ENCODE measurements at regions of chr14 and their contacts with region 1.

Region 1: GRCh38 chr14:74249433-74250375 is 10.5 kb downstream of the VSX2 start:
- DNase-seq: no peak
- ATAC-seq: no peak
- H3K4me3 Mint-ChIP-seq: no peak overlapping the region
- H3K27ac Mint-ChIP-seq: no peak overlapping the region
- H3K4me1 Mint-ChIP-seq: peaks cover 5% of the 10 kb centered on the region
- H3K27me3 Mint-ChIP-seq: peaks cover 45% of the 10 kb centered on the region
- CTCF ChIP-seq: no peak

Region 2: GRCh38 chr14:73943083-73943482 is 306.6 kb before region 1 on chr14:
- CTCF ChIA-PET with region 1: no interaction called
- POLR2A ChIA-PET with region 1: no interaction called
- intact Hi-C with region 1: no loop called
- DNase-seq: no peak
- ATAC-seq: no peak
- H3K4me3 Mint-ChIP-seq: no peak overlapping the region
- H3K27ac Mint-ChIP-seq: no peak overlapping the region
- H3K4me1 Mint-ChIP-seq: no peaks in the 10 kb centered on the region
- H3K27me3 Mint-ChIP-seq: no peaks in the 10 kb centered on the region
- CTCF ChIP-seq: no peak

Region 3: GRCh38 chr14:74109369-74109768 is 140.3 kb before region 1 on chr14:
- CTCF ChIA-PET with region 1: interaction called, 10 read pairs
- POLR2A ChIA-PET with region 1: interaction called, 3 read pairs
- intact Hi-C with region 1: loop called (anchors 1 kb)
- DNase-seq: no peak
- ATAC-seq: no peak
- H3K4me3 Mint-ChIP-seq: no peak overlapping the region
- H3K27ac Mint-ChIP-seq: no peak overlapping the region
- H3K4me1 Mint-ChIP-seq: no peaks in the 10 kb centered on the region
- H3K27me3 Mint-ChIP-seq: no peaks in the 10 kb centered on the region
- CTCF ChIP-seq: no peak

Region 4: GRCh38 chr14:74217672-74218448 is 31.8 kb before region 1 on chr14:
- CTCF ChIA-PET with region 1: no interaction called
- POLR2A ChIA-PET with region 1: interaction called, 6 read pairs
- intact Hi-C with region 1: loop called (anchors 1 kb)
- DNase-seq: peak; percentile 71
- ATAC-seq: peak; percentile 90
- H3K4me3 Mint-ChIP-seq: no peak overlapping the region
- H3K27ac Mint-ChIP-seq: no peak overlapping the region
- H3K4me1 Mint-ChIP-seq: peaks cover 2% of the 10 kb centered on the region
- H3K27me3 Mint-ChIP-seq: peaks cover 14% of the 10 kb centered on the region
- CTCF ChIP-seq: peak; percentile 46